GM13977 (cell line): ENCODE measurements at regions of chr5 and their contacts with region 1.

Region 1: GRCh38 chr5:103232393-103232999 is 26.1 kb upstream of the MACIR start:
- DNase-seq: peak; percentile 27
- CTCF ChIP-seq: peak; percentile 70

Region 2: GRCh38 chr5:103475629-103476240 is 243.2 kb after region 1 on chr5:
- in situ Hi-C with region 1: loop called (anchors 10 kb)
- DNase-seq: peak; percentile 11
- CTCF ChIP-seq: peak; percentile 64